ENCODE measurements at regions of chr14 and their contacts with region 1.

Region 1: GRCh38 chr14:67487937-67488893 is at the start of gene TMEM229B:
- DNase-seq: peak in 1 of 2 donors; percentile 29
- ATAC-seq: peak in 2 of 4 donors; percentile 32 to 43
- H3K4me3 ChIP-seq: peak within 1 kb of the TSS; percentile 55
- H3K27ac ChIP-seq: peak within 1 kb of the TSS; percentile 53
- H3K4me1 ChIP-seq: peaks cover 13% of the 10 kb centered on the region
- H3K27me3 ChIP-seq: no peaks in the 10 kb centered on the region
- CTCF ChIP-seq: no peak
- total RNA-seq, gene TMEM229B: 0.46 to 1.2 (median 0.72) TPM

Region 2: DNA sequence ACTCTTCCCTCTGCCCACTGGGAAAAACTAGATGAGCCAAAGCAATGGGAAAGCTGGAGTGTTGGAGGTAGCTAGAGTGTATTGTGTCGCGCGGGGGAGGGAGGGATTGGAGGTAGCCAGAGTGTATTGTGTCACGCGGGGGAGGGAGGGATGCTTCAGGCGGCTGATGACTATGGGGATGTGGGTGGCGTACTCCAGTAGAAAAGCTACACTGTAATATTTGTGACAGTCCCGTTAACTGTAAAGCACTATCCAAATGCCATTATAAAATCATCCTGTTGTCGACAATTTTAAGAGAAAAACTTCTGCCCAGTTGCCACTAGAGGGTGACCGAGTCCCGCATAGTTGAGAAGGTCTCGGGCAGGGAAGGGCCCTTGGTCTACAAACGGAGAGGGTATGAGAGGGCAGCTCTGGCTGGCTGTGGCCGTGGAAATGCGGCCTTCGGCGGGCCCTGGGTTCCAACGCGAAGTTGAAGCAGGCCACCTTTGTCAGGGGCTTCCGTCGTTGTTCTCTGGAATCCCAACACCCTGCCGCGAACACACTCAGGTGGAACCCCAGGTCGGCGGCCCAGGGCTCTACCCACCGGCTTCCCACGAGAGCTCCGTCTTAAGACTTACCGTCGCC is 61.1 kb before region 1 on chr14:
- intact Hi-C with region 1: loop called in 1 of 2 experiments (anchors 5 kb)
- DNase-seq: peak; percentile 65 to 85
- ATAC-seq: peak; percentile 88 to 94 (median 88)
- H3K4me3 ChIP-seq: no peak overlapping the region
- H3K27ac ChIP-seq: no peak overlapping the region
- H3K4me1 ChIP-seq: peaks cover 19% of the 10 kb centered on the region
- H3K27me3 ChIP-seq: no peaks in the 10 kb centered on the region
- CTCF ChIP-seq: peak; percentile 86